IMR-90 (cell line): ENCODE measurements at regions of chr13 and their contacts with region 1.

Region 1: GRCh38 chr13:49606747-49607648 is 21.3 kb upstream of the ARL11 start:
- DNase-seq: peak; percentile 88
- ATAC-seq: peak; percentile 99
- H3K4me3 ChIP-seq: peak overlapping the region; percentile 24; the same call in 1 of the 2 replicates
- H3K27ac ChIP-seq: peak overlapping the region; percentile 45; the same call in 1 of the 2 replicates
- H3K4me1 ChIP-seq: no peaks in the 10 kb centered on the region
- H3K27me3 ChIP-seq: no peaks in the 10 kb centered on the region
- CTCF ChIP-seq: peak; percentile 91
- POLR2A ChIP-seq: 0 out of 2 replicates have a peak, but pooled peaks have one; percentile 30
- RAD21 ChIP-seq: peak; percentile 93

Region 2: DNA sequence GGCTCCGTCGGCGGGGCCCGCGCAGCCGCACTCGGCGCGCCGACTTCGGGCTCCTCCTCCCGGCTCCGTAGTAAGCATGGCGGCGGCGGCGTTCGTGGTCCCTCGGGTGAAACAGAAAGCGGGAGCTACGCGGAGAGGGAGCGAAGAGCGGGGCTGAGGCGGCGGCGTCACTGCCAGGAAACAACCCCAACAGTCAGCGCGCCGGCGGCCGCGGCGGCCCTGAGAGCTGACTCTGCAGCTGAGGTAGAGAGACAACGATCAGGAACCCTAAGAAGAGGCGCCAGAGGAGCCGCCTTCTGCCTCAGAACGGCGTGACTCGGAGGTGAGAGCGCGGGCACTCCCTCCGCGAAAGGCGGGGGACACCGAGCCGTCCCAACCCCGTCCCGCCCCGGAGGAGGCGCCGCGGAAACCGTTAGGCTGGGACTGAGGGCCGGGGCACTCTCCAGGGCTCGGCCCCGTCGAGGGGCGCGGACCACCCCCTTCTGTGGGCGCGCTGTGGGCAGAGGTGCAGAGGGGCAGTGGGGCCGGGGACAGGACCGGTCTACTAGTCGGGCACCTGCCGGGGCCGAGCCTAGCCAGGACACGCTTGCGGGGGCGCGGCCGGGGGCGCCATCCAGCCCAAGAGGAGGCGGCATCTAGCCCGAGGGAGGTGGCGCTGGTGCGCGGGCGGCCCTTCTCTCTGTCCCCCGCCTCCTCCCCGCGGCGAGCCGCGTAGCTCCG is 631.0 kb before region 1 on chr13 and contains the start of gene FNDC3A:
- CTCF ChIA-PET with region 1: no interaction called
- POLR2A ChIA-PET with region 1: no interaction called
- dilution Hi-C with region 1: no loop called
- in situ Hi-C with region 1: no loop called
- intact Hi-C with region 1: loop called (anchors 10 kb)
- DNase-seq: peak; percentile 75
- ATAC-seq: peak; percentile 85
- H3K4me3 ChIP-seq: peak within 1 kb of the TSS; percentile 99
- H3K27ac ChIP-seq: peak within 1 kb of the TSS; percentile 97
- H3K4me1 ChIP-seq: peaks cover 9% of the 10 kb centered on the region; the same call in 1 of the 2 replicates
- H3K27me3 ChIP-seq: no peaks in the 10 kb centered on the region
- CTCF ChIP-seq: no peak
- POLR2A ChIP-seq: peak; percentile 65
- RAD21 ChIP-seq: no peak
- total RNA-seq, gene FNDC3A: 60.4 and 72.8 TPM in 2 replicates

Region 3: GRCh38 chr13:49240017-49240416 is 367.0 kb before region 1 on chr13:
- CTCF ChIA-PET with region 1: no interaction called
- POLR2A ChIA-PET with region 1: no interaction called
- dilution Hi-C with region 1: no loop called
- in situ Hi-C with region 1: no loop called
- intact Hi-C with region 1: loop called (anchors 2 kb)
- DNase-seq: peak; percentile 46
- ATAC-seq: peak; percentile 79
- H3K4me3 ChIP-seq: no peak overlapping the region
- H3K27ac ChIP-seq: no peak overlapping the region
- H3K4me1 ChIP-seq: no peaks in the 10 kb centered on the region
- H3K27me3 ChIP-seq: no peaks in the 10 kb centered on the region; the same call in 1 of the 2 replicates
- CTCF ChIP-seq: peak; percentile 58
- POLR2A ChIP-seq: no peak
- RAD21 ChIP-seq: peak; percentile 56

Region 4: GRCh38 chr13:49278211-49278610 is 328.8 kb before region 1 on chr13:
- CTCF ChIA-PET with region 1: no interaction called
- POLR2A ChIA-PET with region 1: no interaction called
- dilution Hi-C with region 1: no loop called
- in situ Hi-C with region 1: no loop called
- intact Hi-C with region 1: loop called (anchors 1 kb)
- DNase-seq: no peak
- ATAC-seq: no peak
- H3K4me3 ChIP-seq: no peak overlapping the region
- H3K27ac ChIP-seq: no peak overlapping the region
- H3K4me1 ChIP-seq: no peaks in the 10 kb centered on the region
- H3K27me3 ChIP-seq: no peaks in the 10 kb centered on the region
- CTCF ChIP-seq: no peak
- POLR2A ChIP-seq: no peak
- RAD21 ChIP-seq: no peak

Region 5: DNA sequence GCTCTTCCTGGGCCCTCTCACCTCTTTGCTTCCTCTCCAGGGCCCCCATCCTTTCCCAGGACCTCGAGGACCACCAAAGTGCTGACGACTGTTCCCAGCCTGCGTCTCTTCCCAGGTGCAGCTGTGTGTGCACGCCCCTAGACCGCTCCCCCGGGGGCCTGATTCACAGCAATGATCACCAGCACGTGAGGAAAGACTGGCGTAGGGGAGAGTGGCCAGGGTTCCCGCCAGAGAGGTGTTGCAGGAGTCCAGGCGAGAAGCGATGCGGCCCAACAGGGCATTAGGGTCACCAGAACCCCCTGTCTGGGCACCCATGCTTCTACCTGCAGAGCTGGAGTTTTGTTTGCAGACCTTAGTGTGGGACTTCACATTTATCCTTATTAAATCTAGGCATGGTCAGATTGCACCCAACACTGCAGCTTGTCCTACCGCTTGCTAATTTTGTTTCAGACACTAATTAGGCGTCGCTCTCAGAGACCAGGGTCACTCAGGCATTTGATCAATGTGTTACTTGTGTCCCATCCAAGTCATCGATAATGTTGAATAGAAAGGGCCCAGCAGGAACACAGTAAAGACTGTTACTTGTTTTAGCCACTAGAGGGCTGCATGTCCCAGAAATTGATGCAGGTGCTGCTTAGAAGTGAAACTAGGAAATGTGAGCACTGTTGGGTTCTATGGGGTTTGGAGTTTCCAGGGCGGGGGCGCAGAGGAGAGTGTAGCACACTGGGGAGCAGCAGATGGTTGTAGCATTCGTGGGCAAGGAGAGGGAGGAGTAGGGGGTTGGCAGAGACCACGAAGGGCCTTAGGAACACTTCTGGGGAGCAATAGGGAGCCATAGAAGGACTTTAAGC is 306.0 kb before region 1 on chr13:
- CTCF ChIA-PET with region 1: interaction called, 4 read pairs
- POLR2A ChIA-PET with region 1: no interaction called
- dilution Hi-C with region 1: no loop called
- in situ Hi-C with region 1: loop called (anchors 5 kb)
- intact Hi-C with region 1: loop called (anchors 2 kb)
- DNase-seq: peak; percentile 76
- ATAC-seq: peak; percentile 94
- H3K4me3 ChIP-seq: no peak overlapping the region
- H3K27ac ChIP-seq: peak overlapping the region; percentile 26; the same call in 1 of the 2 replicates
- H3K4me1 ChIP-seq: peaks cover 3% of the 10 kb centered on the region; the same call in 1 of the 2 replicates
- H3K27me3 ChIP-seq: no peaks in the 10 kb centered on the region
- CTCF ChIP-seq: peak; percentile 92
- POLR2A ChIP-seq: no peak
- RAD21 ChIP-seq: peak; percentile 96

Region 6: GRCh38 chr13:49443704-49444523 is 163.1 kb before region 1 on chr13 and contains the starts of genes CAB39L and SETDB2:
- CTCF ChIA-PET with region 1: interaction called, 5 read pairs
- POLR2A ChIA-PET with region 1: interaction called, 4 read pairs
- dilution Hi-C with region 1: no loop called
- in situ Hi-C with region 1: no loop called
- intact Hi-C with region 1: loop called (anchors 1 kb)
- DNase-seq: peak; percentile 99
- ATAC-seq: peak; percentile 97
- H3K4me3 ChIP-seq: peak within 1 kb of the TSS; percentile 66
- H3K27ac ChIP-seq: peak within 1 kb of the TSS; percentile 93
- H3K4me1 ChIP-seq: no peaks in the 10 kb centered on the region
- H3K27me3 ChIP-seq: no peaks in the 10 kb centered on the region
- CTCF ChIP-seq: peak; percentile 48
- POLR2A ChIP-seq: peak; percentile 85
- RAD21 ChIP-seq: no peak
- total RNA-seq, gene CAB39L: 16.7 and 21.9 TPM in 2 replicates
- total RNA-seq, gene SETDB2: 5.7 and 8.6 TPM in 2 replicates

Region 7: GRCh38 chr13:49954674-49955491 is 347.9 kb after region 1 on chr13:
- CTCF ChIA-PET with region 1: no interaction called
- POLR2A ChIA-PET with region 1: no interaction called
- dilution Hi-C with region 1: no loop called
- in situ Hi-C with region 1: no loop called
- intact Hi-C with region 1: no loop called
- DNase-seq: peak; percentile 28
- ATAC-seq: peak; percentile 74
- H3K4me3 ChIP-seq: no peak overlapping the region
- H3K27ac ChIP-seq: no peak overlapping the region
- H3K4me1 ChIP-seq: peaks cover 6% of the 10 kb centered on the region; the same call in 1 of the 2 replicates
- H3K27me3 ChIP-seq: no peaks in the 10 kb centered on the region
- CTCF ChIP-seq: no peak
- POLR2A ChIP-seq: no peak
- RAD21 ChIP-seq: no peak